ENCODE measurements at regions of chr7 and their contacts with region 1.

Region 1: DNA sequence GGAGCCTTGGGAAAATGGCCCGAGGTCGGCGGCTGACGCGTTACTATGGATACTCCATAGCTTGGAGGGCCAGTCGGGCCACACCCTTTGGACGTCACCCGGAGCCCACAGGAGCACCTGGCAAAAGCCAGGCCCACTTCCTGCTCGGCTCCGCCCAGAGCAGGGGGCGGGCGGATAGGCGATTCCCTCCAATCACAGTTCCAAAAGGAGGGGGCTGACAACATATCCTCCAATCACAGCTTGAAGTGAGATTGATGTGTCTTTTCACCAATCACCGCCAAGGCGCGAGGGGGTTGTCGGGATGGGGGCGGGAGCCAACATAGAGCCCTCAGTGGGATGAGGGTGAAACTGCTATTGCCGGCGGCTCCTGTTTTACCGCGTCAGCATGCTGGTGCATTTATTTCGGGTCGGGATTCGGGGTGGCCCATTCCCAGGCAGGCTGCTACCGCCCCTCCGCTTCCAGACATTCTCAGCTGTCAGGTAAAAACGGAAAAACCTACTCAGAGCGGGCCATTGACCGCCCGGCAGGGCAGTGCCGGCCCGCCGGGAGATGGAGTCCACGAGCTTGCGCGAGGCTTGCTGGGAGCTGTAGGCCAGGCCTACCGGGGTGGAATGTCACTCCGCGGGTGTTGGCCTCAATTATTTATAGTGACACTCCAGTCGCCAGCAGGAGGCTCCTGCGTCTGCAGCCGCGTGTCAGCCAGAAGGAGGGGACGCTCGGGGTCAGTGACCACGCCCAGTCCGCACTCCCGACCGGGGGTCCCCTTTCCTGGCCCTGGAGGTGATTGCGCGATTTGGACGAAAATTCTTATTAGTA is at the start of gene ABCB8:
- DNase-seq: peak; percentile 99
- ATAC-seq: peak; percentile 95
- H3K4me3 Mint-ChIP-seq: peak within 1 kb of the TSS; percentile 92
- H3K27ac Mint-ChIP-seq: peak within 1 kb of the TSS; percentile 99
- H3K4me1 Mint-ChIP-seq: peaks cover 24% of the 10 kb centered on the region
- H3K27me3 Mint-ChIP-seq: peaks cover 8% of the 10 kb centered on the region; the same call in 1 of the 2 replicates
- CTCF ChIP-seq: no peak
- total RNA-seq, gene ABCB8: 27.9 to 35.9 TPM (median 28.4 TPM) in 3 replicates

Region 2: GRCh38 chr7:151051108-151051507 is 22.8 kb after region 1 on chr7:
- CTCF ChIA-PET with region 1: interaction called, 22 read pairs
- POLR2A ChIA-PET with region 1: interaction called, 3 read pairs
- DNase-seq: peak; percentile 90
- ATAC-seq: peak; percentile 85
- H3K4me3 Mint-ChIP-seq: no peak overlapping the region
- H3K27ac Mint-ChIP-seq: no peak overlapping the region
- H3K4me1 Mint-ChIP-seq: peaks cover 3% of the 10 kb centered on the region; the same call in 1 of the 2 replicates
- H3K27me3 Mint-ChIP-seq: peaks cover 34% of the 10 kb centered on the region
- CTCF ChIP-seq: no peak

Region 3: DNA sequence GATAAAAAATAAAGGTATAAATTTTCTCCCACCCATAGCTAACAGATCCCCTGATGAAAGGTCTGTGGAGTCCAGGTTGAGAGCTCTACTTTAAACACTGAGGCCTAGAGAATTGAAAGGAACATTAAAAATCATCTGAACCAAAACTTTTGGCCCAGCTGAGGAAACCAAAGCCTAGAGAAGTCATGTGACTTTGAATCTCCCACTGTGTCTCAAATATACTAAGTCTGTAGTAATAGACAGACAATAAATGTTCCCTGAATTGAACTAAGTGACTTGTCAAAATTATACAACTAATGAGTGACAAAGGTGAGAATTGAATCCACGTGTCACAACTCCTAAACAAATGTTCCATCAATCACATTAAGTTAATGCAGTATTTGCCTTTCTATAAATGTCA is 133.4 kb after region 1 on chr7:
- CTCF ChIA-PET with region 1: no interaction called
- POLR2A ChIA-PET with region 1: no interaction called
- DNase-seq: no peak
- ATAC-seq: no peak
- H3K4me3 Mint-ChIP-seq: no peak overlapping the region
- H3K27ac Mint-ChIP-seq: no peak overlapping the region
- H3K4me1 Mint-ChIP-seq: 0 out of 2 replicates have a peak, but pooled peaks cover 5% of the 10 kb centered on the region
- H3K27me3 Mint-ChIP-seq: peaks cover 6% of the 10 kb centered on the region; the same call in 1 of the 2 replicates
- CTCF ChIP-seq: no peak